AG04449 (cell line): ENCODE measurements at regions of chr12 and their contacts with region 1.

Region 1: GRCh38 chr12:55738123-55739024 is 4.5 kb upstream of the GDF11 start:
- DNase-seq: no peak
- H3K4me3 ChIP-seq: peak overlapping the region; percentile 78
- CTCF ChIP-seq: peak; percentile 56

Region 2: DNA sequence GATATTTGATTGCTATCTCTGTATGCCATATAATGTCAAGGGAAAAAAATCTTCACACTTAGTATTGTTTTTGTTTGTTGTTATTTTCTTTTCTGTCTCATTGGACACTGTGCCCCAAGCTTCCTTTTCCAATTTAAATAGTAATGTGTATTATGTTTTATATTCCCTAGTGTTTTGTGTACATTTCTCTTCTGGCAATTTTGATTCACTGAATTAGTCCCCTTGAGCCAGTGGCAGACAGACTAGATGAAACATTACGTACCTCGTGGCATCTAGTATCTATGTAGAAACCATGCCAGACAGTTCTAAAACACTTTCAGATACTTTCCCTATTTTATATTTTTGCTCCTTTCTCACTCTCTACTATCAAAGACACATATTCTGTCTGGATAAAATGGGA is 424.3 kb before region 1 on chr12 and contains the start of gene OR6C1:
- CTCF ChIA-PET with region 1: no interaction called
- POLR2A ChIA-PET with region 1: no interaction called
- DNase-seq: no peak
- H3K4me3 ChIP-seq: no peak within 1 kb of the TSS
- CTCF ChIP-seq: no peak

Region 3: GRCh38 chr12:55681142-55682077 is 57.0 kb before region 1 on chr12:
- CTCF ChIA-PET with region 1: interaction called, 25 read pairs
- POLR2A ChIA-PET with region 1: no interaction called
- DNase-seq: no peak
- H3K4me3 ChIP-seq: peak overlapping the region; percentile 32
- CTCF ChIP-seq: peak; percentile 35

Region 4: DNA sequence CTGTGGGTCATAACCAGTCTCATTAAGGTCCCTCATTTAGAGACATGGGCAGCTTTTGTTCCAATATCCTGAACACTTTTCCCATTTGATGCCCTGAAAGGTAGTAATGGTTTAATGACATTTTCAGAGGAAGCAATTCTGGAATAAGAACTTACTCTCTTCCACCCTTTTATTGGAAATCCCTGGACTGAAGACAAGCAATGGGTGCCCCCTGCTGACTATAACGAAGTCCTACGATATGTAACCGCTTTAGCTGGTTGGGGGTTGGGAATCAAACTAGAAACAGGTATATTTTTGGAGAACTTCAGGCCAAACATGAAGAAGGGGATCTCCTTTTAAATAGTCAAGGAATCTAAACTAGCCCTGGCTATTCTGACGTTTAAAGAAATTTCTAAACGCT is 58.7 kb after region 1 on chr12:
- CTCF ChIA-PET with region 1: interaction called, 106 read pairs
- POLR2A ChIA-PET with region 1: no interaction called
- DNase-seq: no peak
- H3K4me3 ChIP-seq: no peak overlapping the region
- CTCF ChIP-seq: peak; percentile 54

Region 5: GRCh38 chr12:55817346-55818139 is 79.2 kb after region 1 on chr12 and contains the starts of genes ORMDL2 and SARNP:
- CTCF ChIA-PET with region 1: interaction called, 33 read pairs
- POLR2A ChIA-PET with region 1: interaction called, 3 read pairs
- DNase-seq: peak; percentile 99
- H3K4me3 ChIP-seq: peak within 1 kb of the TSS; percentile 92
- CTCF ChIP-seq: no peak

Region 6: DNA sequence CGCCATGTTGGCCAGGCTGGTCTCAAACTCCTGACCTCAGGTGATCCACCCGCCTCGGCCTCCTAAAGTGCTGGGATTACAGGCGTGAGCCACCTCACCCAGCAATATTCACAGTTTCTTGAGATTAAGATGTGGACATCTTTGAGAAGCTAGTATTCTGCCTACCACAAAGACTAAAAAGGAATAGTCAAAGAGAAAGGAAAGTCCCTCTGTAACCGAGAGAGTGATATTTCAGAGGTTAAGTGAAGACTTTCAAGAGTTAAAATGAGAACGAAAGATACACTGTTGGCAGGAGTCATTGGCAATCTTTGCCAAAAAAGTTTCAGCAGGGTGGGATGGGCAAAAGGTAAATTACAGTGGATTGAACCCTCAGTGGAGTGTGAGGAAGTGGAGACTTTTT is 208.2 kb after region 1 on chr12:
- CTCF ChIA-PET with region 1: interaction called, 193 read pairs
- POLR2A ChIA-PET with region 1: no interaction called
- DNase-seq: no peak
- H3K4me3 ChIP-seq: no peak overlapping the region
- CTCF ChIP-seq: no peak

Region 7: DNA sequence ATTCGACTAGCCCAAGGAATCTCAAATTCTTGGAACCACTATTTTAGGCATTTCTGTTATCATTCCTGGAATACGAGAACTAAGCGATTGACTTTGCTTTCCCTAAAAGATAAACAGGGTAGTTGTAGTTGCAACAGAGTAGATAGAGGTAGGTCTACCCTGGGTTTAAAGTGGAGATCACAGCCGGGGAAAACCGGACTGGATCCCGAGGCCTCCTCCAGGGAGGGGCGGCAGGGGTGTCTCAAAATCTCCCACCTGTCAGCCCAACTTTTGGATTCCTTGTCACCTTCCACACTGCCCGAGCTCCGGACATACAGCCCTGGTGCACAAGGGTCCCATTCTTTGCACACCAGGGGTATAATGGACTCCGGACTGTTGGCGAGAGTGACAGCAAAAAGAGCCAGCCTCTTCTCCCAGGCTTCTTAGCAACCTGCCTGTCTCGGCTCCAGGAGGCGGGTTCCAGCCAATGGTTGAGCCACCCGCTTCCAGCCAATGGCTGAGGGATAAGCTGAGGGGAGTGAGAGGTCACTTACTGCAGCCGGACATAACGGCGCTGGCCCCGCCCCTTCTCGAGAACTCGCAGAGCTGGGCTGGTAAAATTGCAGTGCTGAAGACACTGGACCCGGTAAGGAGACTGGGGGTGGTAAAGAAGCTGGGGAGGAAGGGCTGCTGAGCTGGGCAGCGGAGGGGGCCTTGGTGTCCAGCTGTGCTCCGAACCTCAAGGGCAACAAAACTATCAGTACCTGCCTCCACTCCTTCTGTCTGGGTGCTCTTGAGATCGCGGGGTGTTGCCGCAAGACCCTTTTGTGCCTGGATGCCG is 258.6 kb after region 1 on chr12 and contains the start of gene SUOX:
- CTCF ChIA-PET with region 1: interaction called, 39 read pairs
- POLR2A ChIA-PET with region 1: no interaction called
- DNase-seq: peak; percentile 85
- H3K4me3 ChIP-seq: peak within 1 kb of the TSS; percentile 93
- CTCF ChIP-seq: no peak

Region 8: DNA sequence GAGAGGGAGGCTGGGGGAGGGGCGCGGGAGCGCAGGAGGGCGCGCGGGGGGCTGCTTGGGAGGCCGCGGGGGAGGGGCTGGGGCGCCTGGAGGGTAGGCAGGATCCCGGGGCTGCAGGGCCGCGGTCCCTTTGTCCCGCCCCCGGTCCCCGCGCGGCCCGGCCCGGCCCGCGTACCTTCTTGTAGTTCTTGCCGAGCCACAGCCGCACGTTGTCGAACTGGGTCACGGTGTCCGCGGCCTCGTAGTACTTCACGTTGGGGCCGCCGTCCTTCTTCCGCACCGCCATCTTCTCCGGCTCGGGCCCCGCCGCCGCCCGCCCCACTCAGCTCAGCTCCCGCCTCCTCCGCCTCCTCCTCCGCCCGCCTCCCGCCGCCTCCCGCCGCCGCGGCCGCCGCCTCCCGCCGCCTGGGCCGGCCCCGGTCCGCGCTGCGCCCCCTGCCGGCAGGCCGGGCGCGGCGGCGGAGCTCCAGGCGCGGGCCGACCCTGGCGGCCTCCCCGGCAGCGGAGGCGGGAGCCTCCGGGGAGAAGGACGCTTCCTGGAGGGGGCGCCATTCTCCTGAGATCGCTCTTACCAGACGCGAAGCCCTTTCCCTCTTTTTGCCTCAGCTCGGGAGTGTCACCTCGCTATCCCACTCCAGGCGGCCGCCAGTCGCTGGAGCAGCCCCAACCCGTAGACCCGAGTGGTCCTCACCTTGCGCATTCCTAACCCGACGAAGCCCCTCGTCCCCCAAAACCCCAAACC is 451.0 kb after region 1 on chr12 and contains the start of gene SMARCC2:
- CTCF ChIA-PET with region 1: interaction called, 57 read pairs
- POLR2A ChIA-PET with region 1: no interaction called
- DNase-seq: no peak
- H3K4me3 ChIP-seq: peak within 1 kb of the TSS; percentile 82
- CTCF ChIP-seq: peak; percentile 87